ENCODE measurements at regions of chr3 and their contacts with region 1.

Region 1: DNA sequence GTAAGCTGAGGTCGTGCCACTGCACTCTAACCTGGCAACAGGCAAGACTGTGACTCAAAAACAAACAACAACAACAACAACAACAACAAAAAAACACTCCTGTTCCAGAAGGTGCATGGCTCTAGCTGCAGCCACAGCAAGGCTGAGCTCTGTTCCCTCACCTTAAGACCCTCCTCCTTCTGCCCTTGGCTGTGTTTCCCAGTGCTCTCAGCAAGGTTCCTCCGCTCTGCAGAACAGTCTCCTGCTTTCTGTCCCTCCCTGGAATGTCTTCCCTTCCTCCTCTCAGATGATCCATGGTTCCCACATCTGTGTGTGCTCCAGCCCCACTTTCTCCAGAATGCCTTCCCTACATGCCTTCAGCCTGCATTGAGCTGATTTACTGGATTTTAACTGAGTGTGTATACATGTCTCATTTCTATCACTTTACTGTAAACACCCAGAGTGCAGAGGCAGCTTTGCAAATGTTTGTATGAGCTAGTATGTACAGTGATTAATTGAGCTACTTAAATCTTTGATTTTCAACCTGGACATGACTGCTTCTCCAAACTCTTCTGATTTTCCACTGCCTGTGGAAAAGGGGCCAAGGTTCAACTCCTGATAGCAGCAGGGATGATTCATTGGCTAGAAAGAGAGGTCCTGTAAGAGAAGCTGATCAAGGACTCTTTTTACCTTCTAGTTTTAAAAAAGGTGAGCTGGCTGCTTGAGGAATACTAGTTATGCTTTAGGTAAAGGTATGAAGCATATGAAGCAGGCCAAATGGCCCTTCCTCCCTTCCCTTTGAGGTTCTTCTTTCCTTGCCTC is 14.7 kb downstream of the ANKUB1 start:
- DNase-seq: no peak
- H3K4me3 ChIP-seq: no peak overlapping the region
- H3K27ac ChIP-seq: no peak overlapping the region
- H3K4me1 ChIP-seq: no peaks in the 10 kb centered on the region
- H3K27me3 ChIP-seq: no peaks in the 10 kb centered on the region; a peak in 1 of 7 replicates
- CTCF ChIP-seq: no peak
- EP300 ChIP-seq: no peak
- POLR2A ChIP-seq: no peak
- RAD21 ChIP-seq: no peak

Region 2: GRCh38 chr3:149765762-149766334 is 11.8 kb before region 1 on chr3:
- CTCF ChIA-PET with region 1: interaction called, 47 read pairs
- POLR2A ChIA-PET with region 1: interaction called, 6 read pairs
- DNase-seq: no peak
- H3K4me3 ChIP-seq: no peak overlapping the region
- H3K27ac ChIP-seq: no peak overlapping the region
- H3K4me1 ChIP-seq: no peaks in the 10 kb centered on the region
- H3K27me3 ChIP-seq: no peaks in the 10 kb centered on the region
- CTCF ChIP-seq: peak in 2 of 3 experiments; percentile 52 to 59; a peak in 2 of 4 replicates
- EP300 ChIP-seq: no peak
- POLR2A ChIP-seq: no peak
- RAD21 ChIP-seq: peak; percentile 53 to 63